Cardiac septum (tissue), 1 donor: ENCODE measurements at regions of chr2 and their contacts with region 1.

Region 1: GRCh38 chr2:136423516-136423996 is 305.6 kb upstream of the CXCR4 start:
- DNase-seq: peak; percentile 85

Region 2: GRCh38 chr2:136305517-136306192 is 117.9 kb before region 1 on chr2:
- intact Hi-C with region 1: no loop called
- DNase-seq: no peak

Region 3: DNA sequence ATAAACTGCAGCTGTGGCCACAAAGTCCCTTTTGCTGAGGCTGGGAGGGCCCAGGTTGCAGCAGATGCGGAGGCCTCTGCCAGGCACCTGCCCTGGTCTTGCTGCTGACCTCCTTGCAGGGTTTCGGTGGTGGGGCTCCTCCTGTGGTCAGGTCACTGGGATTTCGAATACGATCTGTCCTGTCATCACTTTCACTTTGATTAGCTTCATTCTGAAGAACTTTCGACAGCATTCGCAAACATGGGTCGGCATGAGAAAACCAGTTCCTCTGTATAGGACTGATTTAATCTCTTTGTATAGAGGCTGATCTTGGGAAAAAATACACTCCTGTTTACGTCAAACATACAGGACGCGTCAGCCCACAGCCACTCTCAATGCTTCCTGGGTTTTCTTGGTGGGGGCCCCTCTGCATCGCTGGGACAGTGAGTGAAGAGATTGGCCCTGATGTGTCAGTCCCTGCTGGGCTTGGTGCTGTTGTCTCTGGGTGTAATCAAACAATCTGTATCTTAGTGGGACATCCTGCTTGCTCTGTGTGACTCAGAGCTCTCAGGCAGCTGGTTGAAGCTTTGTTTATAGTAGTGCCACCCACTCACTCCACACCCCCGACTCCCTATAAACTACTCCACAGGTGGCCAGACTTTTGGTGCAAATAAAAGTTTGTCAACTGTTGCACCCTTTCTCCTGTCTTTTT is 96.2 kb before region 1 on chr2:
- intact Hi-C with region 1: no loop called
- DNase-seq: no peak

Region 4: DNA sequence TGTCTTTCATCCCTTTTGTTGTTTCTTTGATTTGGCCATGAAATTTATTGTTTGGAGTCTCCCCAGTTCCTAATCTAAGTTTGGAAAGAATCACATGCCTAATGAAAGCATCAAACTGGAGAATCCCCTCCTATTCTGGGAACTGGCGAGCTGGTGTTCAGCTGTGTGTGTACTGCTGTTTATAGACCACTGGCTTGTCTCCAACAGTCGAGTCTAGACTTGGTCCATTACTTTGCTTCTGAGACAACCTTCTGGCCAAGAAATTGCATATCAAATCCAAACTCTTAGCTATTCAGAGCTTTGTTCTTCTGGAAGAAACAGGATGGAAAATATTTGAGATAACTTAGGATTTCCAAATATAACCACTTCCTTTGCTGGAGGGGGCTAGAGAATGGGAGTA is 230.3 kb after region 1 on chr2:
- intact Hi-C with region 1: loop called (anchors 5 kb)
- DNase-seq: no peak

Region 5: DNA sequence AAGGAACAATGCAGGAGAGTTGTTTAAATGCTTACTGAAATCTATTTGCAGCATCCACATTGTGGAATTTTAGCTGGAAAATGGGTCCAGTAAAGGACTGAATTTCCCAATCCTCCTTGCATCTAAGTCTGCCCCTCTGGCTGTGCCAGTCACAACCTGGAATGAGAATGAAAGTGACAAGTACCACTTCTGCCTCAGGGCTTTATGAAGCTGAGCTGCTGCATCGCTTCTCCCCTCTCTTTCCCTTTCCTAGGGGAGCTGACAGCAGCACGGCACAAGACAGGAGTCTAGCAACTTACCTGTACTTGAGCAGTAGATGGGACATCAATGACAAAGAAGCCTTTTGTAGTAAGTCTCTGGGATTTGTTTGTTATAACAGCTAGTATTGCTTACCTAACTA is 314.5 kb after region 1 on chr2:
- intact Hi-C with region 1: loop called (anchors 2 kb)
- DNase-seq: no peak